Dendritic cell treated with granulocyte-macrophage colony-stimulating factor and Interleukin-4, amounts not matched to agents 40 ng/mL and 50 ng/mL, for 4 days (primary cell): ENCODE measurements at regions of chr3 and their contacts with region 1.

Region 1: GRCh38 chr3:154334973-154335420 is 10.7 kb upstream of the DHX36 start:
- H3K4me3 Mint-ChIP-seq: no peak overlapping the region
- H3K27ac Mint-ChIP-seq: no peak overlapping the region
- H3K4me1 Mint-ChIP-seq: no peaks in the 10 kb centered on the region
- H3K27me3 Mint-ChIP-seq: peaks cover 3% of the 10 kb centered on the region

Region 2: DNA sequence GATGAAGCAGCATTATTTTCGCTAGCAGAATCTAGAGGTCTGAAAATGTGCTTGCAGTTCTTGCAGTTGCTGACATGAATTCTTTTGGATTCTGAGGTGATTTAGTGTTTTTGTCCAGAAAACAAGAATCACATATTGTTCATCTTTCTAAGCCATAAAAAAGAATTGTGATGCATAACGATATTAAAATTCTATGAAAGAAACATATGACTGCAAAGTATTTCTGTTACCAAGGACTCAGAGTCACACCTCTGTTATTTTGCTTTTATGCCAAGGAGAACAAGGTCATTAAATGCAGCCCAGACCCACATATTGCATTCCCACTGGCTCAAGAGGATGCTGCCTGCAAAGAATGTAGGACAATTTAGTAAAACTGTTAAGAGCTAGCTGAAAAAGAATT is 394.7 kb after region 1 on chr3:
- intact Hi-C with region 1: loop called (anchors 2 kb)
- H3K4me3 Mint-ChIP-seq: no peak overlapping the region
- H3K27ac Mint-ChIP-seq: no peak overlapping the region
- H3K4me1 Mint-ChIP-seq: peaks cover 16% of the 10 kb centered on the region
- H3K27me3 Mint-ChIP-seq: no peaks in the 10 kb centered on the region

Region 3: DNA sequence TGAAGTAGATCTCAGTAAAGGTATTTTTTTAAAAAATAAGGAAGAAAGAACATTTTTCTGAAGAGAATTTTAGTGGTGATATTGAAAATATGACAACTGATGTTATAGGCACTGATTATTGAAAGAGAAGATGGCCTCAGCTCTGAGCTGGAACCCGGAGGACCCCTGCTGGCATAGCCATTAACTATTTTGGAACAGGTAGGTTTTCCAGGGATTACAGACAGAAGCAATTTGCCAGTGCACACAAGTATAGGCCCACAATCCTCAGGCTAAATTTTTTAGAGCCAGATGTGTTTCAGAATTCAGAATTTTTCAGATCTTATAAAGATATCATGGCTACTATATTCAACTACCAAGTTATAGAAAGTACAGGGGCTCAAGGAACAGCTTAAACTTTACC is 411.0 kb after region 1 on chr3:
- intact Hi-C with region 1: loop called (anchors 5 kb)
- H3K4me3 Mint-ChIP-seq: no peak overlapping the region
- H3K27ac Mint-ChIP-seq: no peak overlapping the region
- H3K4me1 Mint-ChIP-seq: no peaks in the 10 kb centered on the region
- H3K27me3 Mint-ChIP-seq: no peaks in the 10 kb centered on the region